ENCODE measurements at regions of chr3 and their contacts with region 1.

Region 1: DNA sequence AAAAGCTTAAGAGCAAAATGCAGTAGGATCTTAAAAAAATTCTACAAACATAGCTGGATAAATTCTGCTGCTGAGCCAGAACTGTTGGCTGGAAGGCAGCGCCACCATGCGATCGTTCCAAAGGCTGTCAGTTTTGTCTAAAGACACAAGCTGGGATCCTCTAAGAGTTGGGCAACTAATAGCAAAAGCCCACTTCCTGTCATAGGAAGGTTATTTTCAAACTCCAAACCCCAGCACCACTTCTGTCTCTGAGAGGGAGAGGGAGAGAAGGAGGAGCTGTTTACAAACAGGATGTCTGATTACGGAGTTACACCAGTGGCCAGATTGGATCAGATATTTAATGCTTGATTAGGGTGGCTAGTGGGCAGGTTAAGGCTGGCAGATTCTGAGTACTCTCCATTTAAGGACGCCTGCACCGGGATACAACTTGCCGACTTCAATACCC is 44.0 kb downstream of the EIF4E3 start:
- DNase-seq: peak; percentile 17
- H3K4me3 ChIP-seq: no peak overlapping the region
- CTCF ChIP-seq: peak; percentile 74

Region 2: GRCh38 chr3:70064194-70064779 is 1617.0 kb before region 1 on chr3:
- CTCF ChIA-PET with region 1: interaction called, 11 read pairs
- POLR2A ChIA-PET with region 1: no interaction called
- DNase-seq: no peak
- H3K4me3 ChIP-seq: no peak overlapping the region
- CTCF ChIP-seq: peak; percentile 57

Region 3: GRCh38 chr3:71478568-71478967 is 202.7 kb before region 1 on chr3:
- CTCF ChIA-PET with region 1: no interaction called
- POLR2A ChIA-PET with region 1: no interaction called
- DNase-seq: no peak
- H3K4me3 ChIP-seq: no peak overlapping the region
- CTCF ChIP-seq: no peak

Region 4: DNA sequence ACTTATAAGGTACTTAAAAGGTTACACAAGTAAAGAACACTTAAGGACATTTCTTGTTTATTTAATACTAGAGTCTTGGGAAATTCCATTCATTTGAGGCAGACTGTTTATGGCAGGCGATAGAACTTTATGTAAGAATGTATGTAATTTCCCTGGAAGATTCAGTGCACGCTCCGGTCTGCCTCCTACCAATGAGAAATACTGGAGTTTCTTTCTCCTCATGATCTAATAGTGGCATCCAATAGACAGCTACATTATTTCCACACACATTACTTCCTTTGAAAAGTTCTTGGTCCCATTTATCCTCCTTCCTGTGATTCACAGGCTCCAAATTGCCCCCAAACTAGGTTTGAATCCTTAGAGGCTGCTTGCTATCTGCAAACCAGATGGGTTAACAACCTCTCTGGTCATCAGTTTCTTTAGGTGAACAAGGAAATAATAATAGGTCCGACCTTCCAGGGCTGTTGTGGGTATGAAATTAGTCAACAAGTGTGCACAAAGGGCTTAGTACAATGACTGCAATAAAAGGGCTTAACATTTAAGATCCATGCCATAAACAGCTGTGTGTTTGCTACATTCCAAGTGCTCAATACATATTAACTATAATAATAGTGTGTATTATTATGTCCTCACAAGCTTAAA is 13.2 kb after region 1 on chr3:
- CTCF ChIA-PET with region 1: interaction called, 29 read pairs
- POLR2A ChIA-PET with region 1: no interaction called
- DNase-seq: peak; percentile 92
- H3K4me3 ChIP-seq: no peak overlapping the region
- CTCF ChIP-seq: no peak

Region 5: GRCh38 chr3:73614411-73614810 is 1933.2 kb after region 1 on chr3:
- CTCF ChIA-PET with region 1: no interaction called
- POLR2A ChIA-PET with region 1: no interaction called
- DNase-seq: no peak
- H3K4me3 ChIP-seq: no peak overlapping the region
- CTCF ChIP-seq: no peak